Activated CD4-positive, alpha-beta T cell treated with anti-CD3 and anti-CD28 coated beads for 36 hours (primary cell): ENCODE measurements at regions of chr13 and their contacts with region 1.

Region 1: DNA sequence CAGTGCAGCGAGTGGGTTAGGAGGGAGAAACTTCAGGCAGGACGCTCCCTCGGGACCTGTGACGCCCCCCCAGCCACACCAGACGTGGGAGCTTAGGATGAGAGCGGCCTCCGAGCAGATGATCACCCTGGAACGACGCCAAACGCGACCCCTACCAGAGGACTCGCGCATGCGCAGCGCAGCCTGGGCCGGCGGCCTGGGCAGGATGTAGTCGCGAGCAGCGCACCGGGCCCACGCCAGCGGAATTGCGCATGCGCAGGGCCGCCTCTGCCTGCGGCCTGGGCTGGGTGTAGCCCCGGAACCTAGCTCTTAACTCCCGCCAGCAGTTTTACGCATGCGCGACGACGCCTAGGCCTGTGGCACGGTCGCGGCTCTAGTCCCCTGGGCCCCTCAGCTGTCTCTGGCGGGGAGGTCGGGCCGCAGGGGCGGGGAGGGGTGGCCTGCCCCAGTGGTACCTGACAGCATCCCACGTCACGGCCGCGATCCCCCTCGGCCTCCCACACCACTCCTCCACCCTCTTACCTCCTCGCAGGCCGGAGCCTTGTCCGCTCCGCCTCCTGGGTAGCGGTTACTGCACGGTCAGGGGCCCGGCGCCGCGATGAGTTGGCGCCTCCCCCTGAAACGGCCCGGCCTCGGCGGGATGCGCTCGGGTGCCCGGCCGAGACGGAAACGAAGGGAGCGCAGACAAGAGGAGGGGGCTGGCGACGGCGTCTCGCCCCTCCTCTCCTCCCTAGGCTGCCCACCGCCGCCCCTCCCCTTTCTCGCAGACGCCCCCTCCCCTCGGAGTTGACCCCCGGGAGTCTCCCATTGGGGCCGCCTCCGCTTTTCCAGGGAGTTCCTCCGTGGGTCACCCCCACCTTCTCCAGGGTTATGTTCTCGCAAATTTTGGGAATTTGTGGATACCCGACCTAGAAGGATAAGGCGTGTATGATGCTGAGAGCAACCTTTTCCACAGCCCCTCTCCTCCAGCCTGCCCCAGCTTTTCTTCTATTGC is at the start of gene RCBTB2:
- DNase-seq: peak; percentile 99
- ATAC-seq: peak; percentile 93
- H3K4me3 Mint-ChIP-seq: peak within 1 kb of the TSS; percentile 92
- H3K27ac Mint-ChIP-seq: peak within 1 kb of the TSS; percentile 97
- H3K4me1 Mint-ChIP-seq: peaks cover 24% of the 10 kb centered on the region
- H3K27me3 Mint-ChIP-seq: no peaks in the 10 kb centered on the region
- total RNA-seq, gene RCBTB2: 1.1 to 1.6 TPM

Region 2: DNA sequence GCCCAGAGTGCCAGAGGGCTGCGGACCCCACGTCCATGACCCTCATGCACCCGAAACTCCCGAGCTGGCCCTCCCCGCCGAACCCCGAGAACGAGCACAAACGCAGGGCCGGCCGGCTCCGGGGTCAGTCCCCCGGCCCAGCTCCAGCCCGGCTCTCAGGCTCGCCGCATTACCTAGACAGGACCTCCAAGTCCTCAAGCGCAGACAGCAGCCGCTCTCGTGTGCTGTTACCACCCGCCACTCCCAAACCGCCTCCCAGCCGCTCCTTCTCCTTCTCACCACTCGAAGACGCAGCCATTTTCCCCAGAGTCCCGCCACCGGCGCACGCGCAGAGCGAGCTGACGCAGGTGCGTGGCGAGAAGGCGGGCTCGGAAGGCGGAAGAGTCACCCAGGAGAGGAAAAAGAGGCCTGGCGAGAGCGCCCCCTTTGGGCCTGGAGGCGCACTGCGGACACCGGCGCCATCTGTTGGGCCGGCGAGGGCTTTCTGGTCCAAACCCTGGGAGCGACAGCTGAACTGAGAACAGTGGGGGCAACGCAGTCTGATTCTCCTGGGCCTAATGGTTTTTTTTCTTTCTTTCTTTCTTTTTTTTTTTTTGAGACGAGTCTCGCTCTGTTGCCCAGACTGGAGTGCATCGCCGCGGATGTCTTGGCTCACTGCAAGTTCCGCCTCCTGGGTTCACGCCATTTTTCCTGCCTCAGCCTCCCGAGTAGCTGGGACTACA is 437.9 kb before region 1 on chr13 and contains the start of gene MED4:
- CTCF ChIA-PET with region 1: no interaction called
- POLR2A ChIA-PET with region 1: no interaction called
- intact Hi-C with region 1: loop called in 1 of 2 experiments (anchors 2 kb)
- DNase-seq: peak; percentile 98
- ATAC-seq: peak; percentile 97
- H3K4me3 Mint-ChIP-seq: peak within 1 kb of the TSS; percentile 97
- H3K27ac Mint-ChIP-seq: peak within 1 kb of the TSS; percentile 92
- H3K4me1 Mint-ChIP-seq: peaks cover 29% of the 10 kb centered on the region
- H3K27me3 Mint-ChIP-seq: no peaks in the 10 kb centered on the region
- total RNA-seq, gene MED4: 53.5 to 62.7 TPM

Region 3: DNA sequence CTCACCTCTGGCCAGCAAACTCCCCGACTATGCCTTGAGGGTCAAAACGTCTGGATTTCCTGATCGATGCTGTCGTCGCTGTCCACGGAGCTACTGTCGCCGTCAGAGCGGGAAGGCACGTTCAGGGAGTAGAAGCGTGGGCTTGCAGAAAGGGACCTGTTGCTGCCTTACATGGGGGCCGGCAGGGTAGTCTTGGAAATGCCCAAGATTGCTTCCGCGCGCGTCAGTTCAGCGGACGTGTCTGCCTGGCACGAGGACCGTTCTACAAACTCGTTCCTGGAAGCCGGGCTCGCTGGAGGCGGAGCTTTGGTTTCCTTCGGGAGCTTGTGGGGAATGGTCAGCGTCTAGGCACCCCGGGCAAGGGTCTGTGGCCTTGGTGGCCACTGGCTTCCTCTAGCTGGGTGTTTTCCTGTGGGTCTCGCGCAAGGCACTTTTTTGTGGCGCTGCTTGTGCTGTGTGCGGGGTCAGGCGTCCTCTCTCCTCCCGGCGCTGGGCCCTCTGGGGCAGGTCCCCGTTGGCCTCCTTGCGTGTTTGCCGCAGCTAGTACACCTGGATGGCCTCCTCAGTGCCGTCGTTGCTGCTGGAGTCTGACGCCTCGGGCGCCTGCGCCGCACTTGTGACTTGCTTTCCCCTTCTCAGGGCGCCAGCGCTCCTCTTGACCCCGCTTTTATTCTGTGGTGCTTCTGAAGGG is 213.8 kb before region 1 on chr13:
- CTCF ChIA-PET with region 1: no interaction called
- POLR2A ChIA-PET with region 1: no interaction called
- intact Hi-C with region 1: no loop called
- DNase-seq: peak; percentile 53
- ATAC-seq: peak; percentile 50
- H3K4me3 Mint-ChIP-seq: peak overlapping the region; percentile 69
- H3K27ac Mint-ChIP-seq: peak overlapping the region; percentile 56
- H3K4me1 Mint-ChIP-seq: peaks cover 23% of the 10 kb centered on the region
- H3K27me3 Mint-ChIP-seq: peaks cover 3% of the 10 kb centered on the region

Region 4: DNA sequence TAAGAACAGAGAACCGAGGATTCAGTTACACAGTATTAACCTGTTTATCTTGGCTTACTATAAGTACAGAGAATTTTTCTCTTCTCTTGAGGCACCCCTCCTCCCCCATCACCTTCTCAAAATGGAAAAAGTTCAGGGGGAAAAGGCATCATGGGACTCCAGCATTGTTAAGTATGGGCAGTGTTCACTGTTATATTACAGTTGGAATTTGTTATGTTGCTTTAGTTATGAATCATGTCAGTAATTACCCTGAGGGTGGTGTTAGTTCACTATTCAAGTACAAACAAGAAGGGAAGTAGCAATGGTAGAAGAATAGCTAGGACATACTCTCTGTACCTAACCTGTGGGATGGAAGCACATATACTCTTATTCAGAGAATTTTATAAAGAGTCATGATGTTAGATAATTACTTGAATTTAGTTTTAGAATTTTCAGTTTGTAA is 131.9 kb before region 1 on chr13:
- CTCF ChIA-PET with region 1: interaction called, 3 read pairs
- POLR2A ChIA-PET with region 1: interaction called, 3 read pairs
- intact Hi-C with region 1: loop called in 1 of 2 experiments (anchors 2 kb)
- DNase-seq: no peak
- ATAC-seq: peak; percentile 21
- H3K4me3 Mint-ChIP-seq: no peak overlapping the region
- H3K27ac Mint-ChIP-seq: peak overlapping the region; percentile 1
- H3K4me1 Mint-ChIP-seq: peaks cover 53% of the 10 kb centered on the region
- H3K27me3 Mint-ChIP-seq: no peaks in the 10 kb centered on the region

Region 5: DNA sequence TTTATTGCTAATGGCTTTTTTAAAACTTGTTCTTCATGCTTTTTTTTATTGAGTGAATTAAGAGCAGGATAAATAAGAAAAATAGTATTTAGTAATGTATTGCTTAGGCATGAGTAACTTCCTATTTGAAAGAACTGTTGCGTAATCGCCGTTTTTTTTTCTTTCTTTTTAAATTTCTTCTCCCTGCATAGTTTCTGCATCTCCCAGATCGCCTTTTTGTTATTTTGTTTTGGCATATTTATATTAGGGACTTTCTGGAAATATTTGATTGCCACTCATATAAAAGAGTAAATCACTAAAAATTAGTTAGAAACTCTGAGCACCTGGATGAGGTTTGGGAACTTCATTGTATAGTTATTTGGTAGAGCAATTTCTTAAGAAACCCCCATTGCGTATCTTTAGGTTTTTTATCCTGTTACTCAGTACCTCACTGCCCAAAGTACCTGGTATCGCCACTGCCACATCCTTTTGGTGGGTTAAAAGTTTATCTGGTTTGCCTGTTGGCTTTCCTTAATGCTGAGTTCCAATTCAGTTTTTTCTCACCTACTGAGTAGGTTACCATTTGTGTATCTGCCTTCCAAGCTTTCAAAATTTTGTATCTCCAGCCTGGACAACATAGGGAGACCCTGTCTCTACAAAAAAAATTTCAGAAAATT is 83.7 kb before region 1 on chr13:
- CTCF ChIA-PET with region 1: no interaction called
- POLR2A ChIA-PET with region 1: no interaction called
- intact Hi-C with region 1: no loop called
- DNase-seq: no peak
- ATAC-seq: no peak
- H3K4me3 Mint-ChIP-seq: no peak overlapping the region
- H3K27ac Mint-ChIP-seq: no peak overlapping the region
- H3K4me1 Mint-ChIP-seq: peaks cover 32% of the 10 kb centered on the region
- H3K27me3 Mint-ChIP-seq: no peaks in the 10 kb centered on the region

Region 6: DNA sequence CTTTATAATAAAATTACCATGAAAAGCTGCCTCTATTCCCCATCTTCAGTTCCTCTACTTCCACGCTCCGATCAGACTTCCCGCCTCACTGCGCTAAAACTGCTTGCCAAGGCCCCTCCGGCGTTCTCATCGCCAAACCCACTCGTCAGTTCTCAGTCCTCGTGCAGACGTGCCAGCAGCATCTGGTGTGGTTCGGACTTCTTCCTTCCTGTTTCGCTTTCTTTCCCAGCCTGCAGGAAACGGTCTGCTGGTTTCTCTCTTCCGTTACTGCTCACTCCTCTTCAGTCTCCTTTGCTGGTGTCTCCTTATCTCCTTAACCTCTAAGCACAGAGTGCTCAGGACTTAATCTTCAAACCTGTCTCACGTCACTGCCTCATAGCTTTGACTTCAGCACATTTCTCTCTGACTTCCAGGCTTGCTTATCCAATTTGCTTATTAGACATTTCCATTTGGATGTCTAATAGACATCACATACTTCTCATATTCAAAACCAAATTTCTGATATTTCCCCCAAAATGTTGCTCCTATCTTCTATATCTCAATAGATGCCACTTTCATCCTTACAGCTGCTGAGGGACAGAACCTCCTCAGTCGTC is 40.2 kb before region 1 on chr13:
- CTCF ChIA-PET with region 1: interaction called, 3 read pairs
- POLR2A ChIA-PET with region 1: no interaction called
- intact Hi-C with region 1: loop called (anchors 2 to 5 kb)
- DNase-seq: peak; percentile 77
- ATAC-seq: peak; percentile 80
- H3K4me3 Mint-ChIP-seq: no peak overlapping the region
- H3K27ac Mint-ChIP-seq: no peak overlapping the region
- H3K4me1 Mint-ChIP-seq: peaks cover 18% of the 10 kb centered on the region
- H3K27me3 Mint-ChIP-seq: no peaks in the 10 kb centered on the region

Region 7: GRCh38 chr13:48562296-48563066 is 29.7 kb after region 1 on chr13:
- CTCF ChIA-PET with region 1: interaction called, 3 read pairs
- POLR2A ChIA-PET with region 1: interaction called, 4 read pairs
- intact Hi-C with region 1: loop called (anchors 1 to 2 kb)
- DNase-seq: peak; percentile 76
- ATAC-seq: peak; percentile 98
- H3K4me3 Mint-ChIP-seq: no peak overlapping the region
- H3K27ac Mint-ChIP-seq: no peak overlapping the region
- H3K4me1 Mint-ChIP-seq: peaks cover 30% of the 10 kb centered on the region
- H3K27me3 Mint-ChIP-seq: peaks cover 58% of the 10 kb centered on the region